T-cell (primary cell): ENCODE measurements at regions of chr13 and their contacts with region 1.

Region 1: DNA sequence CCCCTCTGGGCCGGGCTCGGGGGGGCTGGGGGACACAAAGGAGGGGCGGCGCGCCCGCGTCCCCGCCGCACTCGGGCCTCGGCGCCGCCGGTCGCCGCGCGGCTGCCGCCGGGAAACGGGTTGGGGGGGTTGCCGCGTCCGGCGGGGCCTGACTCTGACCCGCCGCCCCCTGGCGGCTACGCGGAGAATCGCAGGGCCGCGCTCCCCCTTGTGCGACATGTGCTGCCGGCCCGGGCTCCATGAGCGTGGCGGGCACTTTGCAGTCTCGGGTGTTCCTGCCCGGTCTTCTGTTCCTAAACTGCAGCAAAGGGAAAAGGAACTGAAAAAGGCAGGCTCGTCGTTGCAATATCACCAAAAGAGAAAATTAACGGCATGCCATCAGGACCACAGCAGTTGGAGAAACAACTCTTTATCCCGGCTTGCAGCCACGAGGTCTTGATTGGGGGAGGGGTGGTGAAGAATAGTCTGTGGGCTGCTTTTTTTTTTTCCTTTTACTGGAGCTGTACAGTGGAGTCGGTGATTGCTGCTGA is 1.5 kb downstream of the MIR17HG start:
- DNase-seq: peak; percentile 68 to 94 (median 86)
- ATAC-seq: peak; percentile 56 to 73 (median 64)
- H3K4me3 ChIP-seq: peak overlapping the region; percentile 61 to 84
- H3K4me3 Mint-ChIP-seq: peak overlapping the region; percentile 87 to 91 (median 89)
- H3K27ac ChIP-seq: peak overlapping the region; percentile 25
- H3K27ac Mint-ChIP-seq: peak overlapping the region; percentile 82 to 91
- H3K4me1 ChIP-seq: peaks cover 15 to 27% of the 10 kb centered on the region in 2 experiments
- H3K4me1 Mint-ChIP-seq: peaks cover 37 to 47% (median 46%) of the 10 kb centered on the region in 3 donors
- H3K27me3 ChIP-seq: no peaks in the 10 kb centered on the region
- H3K27me3 Mint-ChIP-seq: no peaks in the 10 kb centered on the region

Region 2: DNA sequence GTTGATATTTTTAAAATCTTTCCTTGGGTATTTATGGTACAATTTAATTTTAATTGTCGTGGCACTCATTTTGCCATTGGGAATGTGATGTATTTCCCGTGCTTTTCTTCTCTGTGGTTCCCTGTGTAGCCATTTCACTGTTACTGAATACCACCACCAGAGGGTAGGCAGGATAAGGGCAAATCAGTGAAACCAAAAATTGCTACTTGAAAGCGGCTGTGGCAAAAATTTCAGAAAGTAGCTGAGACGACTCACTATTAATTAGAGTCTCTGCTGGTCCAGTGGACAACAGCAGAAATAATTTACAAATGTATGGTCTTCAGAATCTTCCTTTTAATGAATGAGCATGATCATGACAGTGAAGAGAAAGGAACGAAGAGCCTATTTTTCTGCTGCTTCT is 35.9 kb before region 1 on chr13:
- CTCF ChIA-PET with region 1: interaction called, 7 to 18 read pairs
- POLR2A ChIA-PET with region 1: no interaction called
- DNase-seq: peak in 11 of 35 experiments; percentile 3 to 63 (median 7)
- ATAC-seq: peak; percentile 48 to 80 (median 60)
- H3K4me3 ChIP-seq: no peak overlapping the region
- H3K4me3 Mint-ChIP-seq: peak overlapping the region in 1 of 3 donors; percentile 16
- H3K27ac ChIP-seq: no peak overlapping the region
- H3K27ac Mint-ChIP-seq: no peak overlapping the region
- H3K4me1 ChIP-seq: no peaks in the 10 kb centered on the region
- H3K4me1 Mint-ChIP-seq: peaks cover 5 to 8% (median 8%) of the 10 kb centered on the region in 3 donors
- H3K27me3 ChIP-seq: no peaks in the 10 kb centered on the region
- H3K27me3 Mint-ChIP-seq: peaks cover 3 to 25% of the 10 kb centered on the region in 2 donors

Region 3: GRCh38 chr13:91368101-91368500 is 19.1 kb after region 1 on chr13:
- CTCF ChIA-PET with region 1: no interaction called
- POLR2A ChIA-PET with region 1: no interaction called
- DNase-seq: no peak
- ATAC-seq: no peak
- H3K4me3 ChIP-seq: no peak overlapping the region
- H3K4me3 Mint-ChIP-seq: no peak overlapping the region
- H3K27ac ChIP-seq: no peak overlapping the region
- H3K27ac Mint-ChIP-seq: no peak overlapping the region
- H3K4me1 ChIP-seq: no peaks in the 10 kb centered on the region
- H3K4me1 Mint-ChIP-seq: no peaks in the 10 kb centered on the region
- H3K27me3 ChIP-seq: no peaks in the 10 kb centered on the region
- H3K27me3 Mint-ChIP-seq: peaks cover 0 to 2% of the 10 kb centered on the region in 2 donors